ENCODE measurements at regions of chr7 and their contacts with region 1.

Region 1: DNA sequence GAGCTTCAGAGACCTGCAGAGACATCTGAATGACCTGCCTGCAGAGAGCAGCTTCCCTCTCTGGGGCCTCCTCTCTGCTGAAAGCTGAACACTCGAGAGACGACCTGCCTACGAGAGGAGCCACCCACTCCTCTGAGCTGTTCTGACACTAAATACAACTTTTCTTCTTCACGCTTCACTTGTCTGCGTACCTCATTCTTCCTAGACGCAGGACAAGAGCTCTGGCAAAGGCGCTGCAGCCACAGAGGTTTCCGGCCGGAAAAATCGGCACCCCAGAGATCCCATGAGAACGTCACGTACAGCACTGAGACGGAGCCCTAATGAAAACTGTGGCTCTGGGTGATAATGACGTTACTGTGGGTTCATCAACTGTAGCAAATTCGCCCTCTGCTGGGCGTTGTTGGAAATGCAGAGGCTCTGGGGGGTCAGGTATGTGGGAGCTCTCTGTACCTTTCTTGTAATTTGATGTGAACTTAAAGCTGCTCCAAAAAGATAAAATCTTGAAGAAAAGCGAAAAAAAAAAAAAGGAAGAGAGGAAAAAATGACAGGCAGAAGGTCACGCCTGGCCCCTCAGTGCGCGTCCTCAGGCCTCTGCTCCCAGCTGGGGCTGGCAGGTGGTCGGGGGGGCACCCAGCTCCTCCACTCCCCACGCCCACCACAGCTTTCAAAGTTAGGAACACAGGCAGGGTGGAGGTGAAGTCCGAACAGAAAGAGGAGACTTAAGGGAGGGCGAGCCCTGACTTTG is 120.7 kb downstream of the DYNC2I1 start:
- DNase-seq: peak; percentile 71 to 85
- H3K4me3 ChIP-seq: peak overlapping the region; percentile 51
- H3K27ac ChIP-seq: no peak overlapping the region
- H3K4me1 ChIP-seq: no peaks in the 10 kb centered on the region
- H3K27me3 ChIP-seq: peaks cover 29% of the 10 kb centered on the region
- CTCF ChIP-seq: peak; percentile 100

Region 2: DNA sequence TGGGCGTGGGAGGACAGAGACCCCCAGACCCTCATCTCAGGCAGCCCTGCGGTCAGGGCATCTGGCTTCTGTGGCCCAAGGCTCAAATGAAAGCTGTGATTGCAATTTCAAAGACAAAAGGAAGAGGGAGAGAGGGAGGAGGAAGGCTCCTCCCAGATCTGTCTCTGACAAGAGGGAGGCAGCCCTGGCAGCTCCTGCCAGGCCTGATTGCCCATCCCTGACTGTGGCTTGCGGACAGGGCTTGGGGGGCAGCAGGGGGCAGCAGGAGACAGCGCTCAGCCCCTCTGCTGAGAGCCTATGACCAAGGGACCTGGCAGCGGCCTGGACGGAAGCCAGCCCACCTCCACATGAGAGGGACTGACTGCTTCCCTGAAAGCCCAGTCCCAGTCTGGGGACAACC is 481.2 kb before region 1 on chr7:
- CTCF ChIA-PET with region 1: no interaction called
- POLR2A ChIA-PET with region 1: no interaction called
- intact Hi-C with region 1: loop called (anchors 2 kb)
- DNase-seq: peak in 1 of 2 experiments; percentile 43
- H3K4me3 ChIP-seq: no peak overlapping the region
- H3K27ac ChIP-seq: no peak overlapping the region
- H3K4me1 ChIP-seq: no peaks in the 10 kb centered on the region
- H3K27me3 ChIP-seq: peaks cover 71% of the 10 kb centered on the region
- CTCF ChIP-seq: peak; percentile 38; the same call in 1 of the 2 replicates

Region 3: GRCh38 chr7:158695726-158696452 is 281.1 kb before region 1 on chr7:
- CTCF ChIA-PET with region 1: interaction called, 5 read pairs
- POLR2A ChIA-PET with region 1: no interaction called
- intact Hi-C with region 1: loop called (anchors 1 kb)
- DNase-seq: peak in 1 of 2 experiments; percentile 48
- H3K4me3 ChIP-seq: no peak overlapping the region
- H3K27ac ChIP-seq: no peak overlapping the region
- H3K4me1 ChIP-seq: no peaks in the 10 kb centered on the region
- H3K27me3 ChIP-seq: no peaks in the 10 kb centered on the region
- CTCF ChIP-seq: peak; percentile 64

Region 4: DNA sequence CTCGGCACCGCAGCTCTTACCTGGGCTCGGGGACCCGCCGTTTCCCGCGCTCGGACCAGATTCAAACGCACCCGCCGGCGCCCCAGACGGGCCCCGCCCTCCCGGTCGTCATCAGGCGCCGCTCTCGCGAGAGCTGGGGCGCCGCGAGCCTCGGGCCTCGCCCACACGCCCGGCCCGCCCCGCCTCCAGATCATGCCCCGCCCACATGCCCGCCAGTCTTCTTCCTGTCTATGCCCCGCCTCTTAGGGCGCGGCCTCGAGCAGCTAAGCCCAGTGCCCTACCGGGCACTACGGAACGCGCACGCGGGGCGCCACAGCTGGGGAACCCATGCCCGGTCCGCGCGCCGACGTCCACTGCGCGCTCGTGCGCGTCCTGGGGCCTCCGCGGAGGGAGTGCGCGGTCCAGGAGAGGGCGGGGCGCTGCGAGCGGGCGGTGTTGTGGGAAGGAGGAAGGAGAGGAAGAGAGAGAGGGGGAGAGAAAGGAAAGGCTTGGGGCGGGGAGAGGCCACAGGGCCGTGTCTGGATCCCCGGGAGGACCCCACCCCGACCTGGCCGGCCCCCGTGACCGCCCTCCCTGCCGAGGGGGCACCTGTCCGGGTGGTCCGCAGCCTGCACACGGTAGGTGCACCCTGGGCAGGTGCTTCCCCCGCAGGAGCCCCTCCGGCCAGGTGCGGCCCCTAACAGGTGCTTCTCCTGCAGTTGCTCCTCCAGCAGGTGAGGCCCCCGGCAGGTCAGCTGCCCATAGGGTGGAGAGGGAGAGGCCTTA is 272.1 kb before region 1 on chr7 and contains the start of gene NCAPG2:
- CTCF ChIA-PET with region 1: interaction called, 5 read pairs
- POLR2A ChIA-PET with region 1: no interaction called
- intact Hi-C with region 1: loop called (anchors 1 kb)
- DNase-seq: peak; percentile 97 to 99
- H3K4me3 ChIP-seq: peak within 1 kb of the TSS; percentile 70
- H3K27ac ChIP-seq: peak within 1 kb of the TSS; percentile 50
- H3K4me1 ChIP-seq: peaks cover 33% of the 10 kb centered on the region
- H3K27me3 ChIP-seq: no peaks in the 10 kb centered on the region
- CTCF ChIP-seq: no peak; the same call in 1 of the 2 replicates
- total RNA-seq, gene NCAPG2: 99.5 and 124 TPM in 2 replicates

Region 5: DNA sequence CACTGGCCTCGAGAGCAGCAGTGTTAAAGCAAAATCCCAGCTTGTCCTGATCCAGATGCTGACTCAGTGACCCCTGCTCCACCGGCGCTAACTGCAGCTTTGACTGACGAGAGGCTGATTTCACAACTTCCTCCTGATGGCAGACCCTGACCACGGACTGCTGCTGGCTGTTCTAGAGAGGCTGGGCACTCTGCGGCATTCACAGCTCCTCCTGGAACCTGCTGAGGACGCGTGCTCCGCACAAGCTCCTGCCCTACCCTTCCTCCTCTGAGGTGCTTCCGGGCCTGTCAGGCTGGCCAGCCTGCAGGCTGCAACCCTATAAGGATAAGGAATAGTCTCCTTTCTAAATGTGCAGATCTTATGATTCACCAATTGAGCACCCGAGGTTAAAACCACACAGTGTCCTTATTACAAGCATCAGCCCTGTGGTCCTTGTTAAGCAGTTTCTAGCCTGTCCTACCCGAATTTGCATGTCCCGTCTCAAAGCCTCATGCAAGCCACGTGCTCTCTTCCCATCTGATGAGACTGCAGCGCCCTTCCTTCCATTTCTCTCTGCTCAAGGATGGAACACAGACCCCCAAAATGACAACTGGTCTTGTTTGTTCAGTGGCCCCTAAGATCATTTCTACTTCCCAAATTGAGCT is 236.9 kb before region 1 on chr7:
- CTCF ChIA-PET with region 1: interaction called, 4 read pairs
- POLR2A ChIA-PET with region 1: no interaction called
- intact Hi-C with region 1: loop called (anchors 2 kb)
- DNase-seq: peak; percentile 81 to 96
- H3K4me3 ChIP-seq: peak overlapping the region; percentile 8; the same call in 1 of the 2 replicates
- H3K27ac ChIP-seq: peak overlapping the region; percentile 84
- H3K4me1 ChIP-seq: peaks cover 41% of the 10 kb centered on the region
- H3K27me3 ChIP-seq: no peaks in the 10 kb centered on the region
- CTCF ChIP-seq: 0 out of 2 replicates have a peak, but pooled peaks have one; percentile 12

Region 6: DNA sequence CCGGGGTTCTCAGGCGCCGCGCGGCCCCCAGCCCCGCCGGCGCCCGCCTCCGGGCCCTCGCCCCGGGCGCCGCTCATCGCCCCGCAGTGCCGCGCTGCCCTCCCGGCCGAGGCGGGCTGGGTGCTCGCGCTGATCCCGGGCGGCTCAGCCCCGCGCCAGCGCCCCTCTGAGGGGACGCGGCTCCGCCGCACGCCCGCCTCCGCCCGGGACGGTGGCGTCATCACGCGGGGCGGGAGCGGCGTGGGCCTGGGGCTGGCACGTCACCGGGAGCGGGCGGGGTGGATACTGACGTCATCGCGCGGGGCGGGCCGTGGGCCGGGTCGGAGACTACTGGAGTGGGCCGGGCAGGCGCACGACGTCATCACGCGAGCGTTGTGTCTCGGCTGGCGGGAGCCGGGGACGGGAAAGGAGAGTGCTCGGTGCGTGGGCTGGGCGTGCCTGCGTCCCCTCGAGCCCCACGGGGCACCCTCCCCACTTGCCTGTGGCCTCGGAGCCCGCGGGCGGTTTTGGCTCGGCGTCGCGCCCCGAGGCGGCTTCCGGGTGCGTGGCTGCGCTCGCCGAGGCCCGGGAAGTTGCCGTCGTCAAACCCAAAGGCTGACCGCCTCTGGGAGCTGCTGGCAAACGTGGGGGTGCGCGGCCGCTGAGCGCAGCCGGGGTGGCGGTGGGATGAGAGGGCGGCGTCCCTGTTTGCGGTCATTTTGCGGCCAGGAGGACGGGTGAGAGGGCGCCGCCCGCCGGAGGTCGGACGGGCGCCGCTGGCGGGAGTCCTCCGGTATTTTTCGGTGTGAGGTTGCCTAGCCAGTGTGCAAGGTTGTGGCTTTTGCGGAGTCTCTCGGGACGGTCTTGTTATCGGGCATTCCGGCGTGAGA is 147.4 kb before region 1 on chr7 and contains the start of gene ESYT2:
- CTCF ChIA-PET with region 1: no interaction called
- POLR2A ChIA-PET with region 1: no interaction called
- intact Hi-C with region 1: loop called (anchors 1 kb)
- DNase-seq: peak; percentile 90 to 99
- H3K4me3 ChIP-seq: peak within 1 kb of the TSS; percentile 84
- H3K27ac ChIP-seq: peak within 1 kb of the TSS; percentile 89
- H3K4me1 ChIP-seq: peaks cover 34% of the 10 kb centered on the region
- H3K27me3 ChIP-seq: no peaks in the 10 kb centered on the region
- CTCF ChIP-seq: peak; percentile 12; the same call in 1 of the 2 replicates
- total RNA-seq, gene ESYT2: 124 and 162 TPM in 2 replicates

Region 7: DNA sequence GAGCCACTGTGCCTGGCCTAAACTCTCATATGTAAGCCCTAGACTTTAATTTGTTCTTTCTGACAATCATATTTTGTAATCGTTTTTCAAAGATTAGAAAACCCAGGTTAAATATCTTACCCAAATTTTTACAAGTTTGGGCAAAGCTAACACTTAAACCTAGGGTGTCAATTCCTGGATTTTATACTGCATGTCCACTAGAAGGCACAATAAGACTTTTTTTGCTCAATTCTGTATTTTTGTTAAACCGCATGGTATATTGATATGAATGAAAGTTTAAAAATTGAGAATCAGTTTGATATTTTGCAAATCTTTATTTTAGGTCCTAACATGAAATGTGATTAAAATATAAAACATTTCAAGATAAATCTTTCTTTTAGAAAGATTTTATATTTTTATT is 91.4 kb before region 1 on chr7:
- CTCF ChIA-PET with region 1: interaction called, 12 read pairs
- POLR2A ChIA-PET with region 1: no interaction called
- intact Hi-C with region 1: no loop called
- DNase-seq: no peak
- H3K4me3 ChIP-seq: no peak overlapping the region
- H3K27ac ChIP-seq: no peak overlapping the region
- H3K4me1 ChIP-seq: no peaks in the 10 kb centered on the region
- H3K27me3 ChIP-seq: no peaks in the 10 kb centered on the region
- CTCF ChIP-seq: peak; percentile 75

Region 8: DNA sequence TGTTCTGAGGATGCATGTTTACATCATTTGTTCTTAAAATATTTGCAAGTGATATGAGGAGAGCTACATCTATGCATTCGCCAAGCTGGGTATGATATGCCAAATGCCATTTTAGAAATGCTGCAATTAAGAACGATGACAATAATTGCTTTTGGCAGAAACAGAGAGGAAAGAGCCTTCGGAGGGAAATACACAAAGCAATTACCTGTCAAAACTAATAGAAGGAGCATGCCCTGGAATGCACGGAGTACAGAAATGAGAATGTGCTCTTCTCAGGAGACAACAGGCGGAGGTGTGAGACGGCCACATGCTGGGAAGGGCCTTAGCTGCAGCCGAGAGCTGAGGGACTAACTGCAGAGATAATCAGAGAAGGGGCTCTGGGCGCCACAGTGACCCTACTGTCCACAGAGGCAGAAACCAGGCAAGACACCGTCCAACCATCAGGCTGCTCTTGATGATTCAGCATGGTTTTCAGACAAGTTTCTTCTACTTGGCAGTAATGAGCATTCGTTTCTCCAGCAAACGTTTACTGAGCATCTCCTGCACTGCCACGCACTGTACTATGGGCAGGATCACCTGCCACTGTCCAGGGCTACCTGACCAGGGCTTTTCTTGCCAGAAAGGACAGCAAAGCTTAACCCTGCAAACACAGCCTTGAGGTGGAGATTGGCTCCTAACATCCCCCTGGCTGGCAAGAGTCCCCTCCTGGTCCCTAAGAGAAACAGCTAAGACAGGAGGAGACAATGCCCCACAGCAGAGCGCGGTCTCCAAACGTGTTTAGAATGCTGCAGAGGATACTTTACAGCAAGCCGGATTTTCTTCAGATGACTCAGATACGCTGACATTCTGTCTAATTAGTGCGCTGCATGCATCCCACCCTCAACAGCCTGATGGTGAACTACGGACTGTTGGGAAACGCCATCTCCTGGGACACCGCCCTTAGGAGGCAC is 149.6 kb after region 1 on chr7:
- CTCF ChIA-PET with region 1: no interaction called
- POLR2A ChIA-PET with region 1: no interaction called
- intact Hi-C with region 1: no loop called
- DNase-seq: no peak
- H3K4me3 ChIP-seq: no peak overlapping the region
- H3K27ac ChIP-seq: no peak overlapping the region
- H3K4me1 ChIP-seq: no peaks in the 10 kb centered on the region
- H3K27me3 ChIP-seq: peaks cover 92% of the 10 kb centered on the region
- CTCF ChIP-seq: no peak

Measured in PC-9 (cell line).